ENCODE measurements at regions of chr3 and their contacts with region 1.

Region 1: DNA sequence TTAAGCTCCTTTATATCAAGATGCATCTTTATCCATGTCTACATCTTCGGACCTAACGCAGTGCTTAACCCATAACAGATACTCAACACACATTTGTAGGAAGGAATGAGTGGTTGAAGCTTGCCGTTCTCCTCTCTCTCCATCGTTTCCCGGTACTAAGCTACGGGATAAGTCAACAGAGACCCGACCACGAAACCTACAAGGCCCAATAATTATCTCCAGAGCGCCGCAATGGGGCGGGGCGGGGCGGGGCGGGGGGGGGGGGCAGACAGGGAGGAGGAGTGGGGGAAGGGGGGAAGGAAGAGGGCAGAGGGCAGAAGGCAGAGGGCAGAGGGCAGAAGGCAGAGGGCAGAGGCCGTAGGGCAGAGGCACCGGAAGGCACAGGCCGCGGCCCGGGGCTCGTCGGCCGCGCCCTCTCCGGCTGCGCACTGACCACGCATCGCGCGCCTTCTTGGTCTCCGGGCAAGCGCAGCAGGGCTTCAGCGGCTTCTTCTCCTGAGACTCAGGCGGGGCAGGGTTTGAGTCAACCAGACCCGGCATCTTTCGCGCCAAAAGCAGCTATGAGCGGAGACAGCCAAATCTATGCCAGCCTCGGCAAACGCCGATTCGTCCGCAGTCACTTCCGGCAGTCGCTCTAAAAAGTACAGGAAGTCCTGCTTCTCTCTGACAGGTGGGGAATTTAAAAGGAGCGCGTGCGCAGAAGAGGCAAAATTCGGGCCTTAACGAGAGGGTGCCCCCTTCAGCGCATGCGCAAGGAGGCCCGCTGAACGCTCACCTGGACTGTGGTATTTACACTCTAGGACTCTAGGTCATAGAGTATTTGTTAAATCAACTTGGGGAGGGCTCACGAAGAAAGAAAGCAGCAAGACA is at the start of gene COX17:
- DNase-seq: peak; percentile 93 to 96
- ATAC-seq: peak; percentile 91 to 95 (median 92)
- H3K4me3 ChIP-seq: peak within 1 kb of the TSS; percentile 92
- H3K27ac ChIP-seq: peak within 1 kb of the TSS; percentile 97
- H3K4me1 ChIP-seq: peaks cover 18% of the 10 kb centered on the region
- H3K27me3 ChIP-seq: no peaks in the 10 kb centered on the region
- CTCF ChIP-seq: no peak
- total RNA-seq, gene COX17: 89.5 to 180 (median 127) TPM

Region 2: DNA sequence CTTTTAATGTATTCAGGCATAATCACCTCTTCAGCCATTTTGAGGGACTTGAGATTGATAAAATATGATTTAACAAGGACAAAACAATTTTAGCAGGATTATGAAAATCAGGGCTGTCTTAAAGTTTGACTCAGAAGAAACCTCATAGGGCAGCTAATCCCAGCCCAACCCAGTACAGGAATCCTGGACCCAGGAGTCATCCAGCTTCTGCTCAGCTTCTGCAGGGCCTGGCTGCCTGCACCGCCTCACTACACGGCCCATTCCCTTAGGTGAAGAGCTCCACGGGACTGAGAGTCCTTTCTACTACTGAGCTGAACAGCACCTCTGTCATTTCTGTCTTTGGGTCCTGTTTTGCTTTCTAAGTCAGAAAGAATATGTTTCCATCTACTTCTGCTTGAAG is 345.3 kb before region 1 on chr3:
- intact Hi-C with region 1: no loop called
- DNase-seq: no peak
- ATAC-seq: no peak
- H3K4me3 ChIP-seq: no peak overlapping the region
- H3K27ac ChIP-seq: no peak overlapping the region
- H3K4me1 ChIP-seq: no peaks in the 10 kb centered on the region
- H3K27me3 ChIP-seq: no peaks in the 10 kb centered on the region
- CTCF ChIP-seq: no peak

Region 3: DNA sequence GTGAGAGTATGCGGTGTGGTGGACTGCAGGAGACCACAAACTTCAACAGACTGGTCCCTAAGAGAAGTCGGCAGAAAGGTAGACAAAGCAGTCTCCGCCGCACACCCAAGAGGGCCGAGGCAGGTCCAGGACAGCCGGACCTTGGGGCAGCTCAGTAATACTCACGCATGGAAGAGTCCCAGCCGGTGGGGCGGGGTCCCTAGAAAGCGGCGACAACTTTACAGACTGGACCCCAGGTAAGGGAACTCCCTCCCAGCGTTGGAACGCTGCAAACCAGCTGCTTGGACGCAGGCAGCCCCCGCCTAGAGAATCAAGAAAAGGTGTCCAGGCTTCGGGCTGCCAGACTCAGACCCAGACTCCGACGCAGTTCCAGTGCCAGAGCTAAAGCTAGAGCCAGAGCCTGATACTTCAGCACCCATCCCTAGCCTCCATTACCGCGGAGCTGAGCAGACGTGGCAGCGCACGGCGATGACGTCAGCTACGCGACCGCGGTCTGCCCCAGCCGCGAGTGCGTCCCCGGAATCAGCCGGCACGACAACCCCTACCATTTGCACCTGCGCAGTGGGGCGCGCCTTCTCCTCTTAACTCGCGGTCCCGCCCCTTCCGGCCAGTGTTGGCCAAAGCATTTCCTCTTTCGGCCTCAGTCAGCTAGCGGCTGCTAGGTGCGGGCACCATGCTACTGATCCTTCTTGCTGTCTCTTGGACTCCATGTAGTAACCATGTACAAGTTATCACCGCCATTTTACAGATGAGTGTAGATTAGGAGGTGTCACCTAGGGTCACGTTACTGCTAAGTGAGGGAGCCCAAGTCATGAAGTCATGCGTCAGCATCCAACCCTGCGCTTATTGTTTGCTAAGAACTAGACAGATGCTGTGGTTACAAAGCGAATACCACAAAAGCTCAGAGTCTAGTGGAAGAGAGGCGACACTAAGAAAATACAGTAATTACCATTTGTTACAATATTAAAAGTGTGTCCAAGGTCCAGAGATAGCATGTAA is 213.5 kb before region 1 on chr3 and contains the start of gene TMEM39A:
- intact Hi-C with region 1: loop called in 1 of 2 experiments (anchors 10 kb)
- DNase-seq: peak; percentile 100
- ATAC-seq: peak; percentile 98 to 99 (median 99)
- H3K4me3 ChIP-seq: peak within 1 kb of the TSS; percentile 87
- H3K27ac ChIP-seq: peak within 1 kb of the TSS; percentile 92
- H3K4me1 ChIP-seq: peaks cover 15% of the 10 kb centered on the region
- H3K27me3 ChIP-seq: no peaks in the 10 kb centered on the region
- CTCF ChIP-seq: peak; percentile 12
- total RNA-seq, gene TMEM39A: 7.5 to 15.6 (median 10.1) TPM

Region 4: DNA sequence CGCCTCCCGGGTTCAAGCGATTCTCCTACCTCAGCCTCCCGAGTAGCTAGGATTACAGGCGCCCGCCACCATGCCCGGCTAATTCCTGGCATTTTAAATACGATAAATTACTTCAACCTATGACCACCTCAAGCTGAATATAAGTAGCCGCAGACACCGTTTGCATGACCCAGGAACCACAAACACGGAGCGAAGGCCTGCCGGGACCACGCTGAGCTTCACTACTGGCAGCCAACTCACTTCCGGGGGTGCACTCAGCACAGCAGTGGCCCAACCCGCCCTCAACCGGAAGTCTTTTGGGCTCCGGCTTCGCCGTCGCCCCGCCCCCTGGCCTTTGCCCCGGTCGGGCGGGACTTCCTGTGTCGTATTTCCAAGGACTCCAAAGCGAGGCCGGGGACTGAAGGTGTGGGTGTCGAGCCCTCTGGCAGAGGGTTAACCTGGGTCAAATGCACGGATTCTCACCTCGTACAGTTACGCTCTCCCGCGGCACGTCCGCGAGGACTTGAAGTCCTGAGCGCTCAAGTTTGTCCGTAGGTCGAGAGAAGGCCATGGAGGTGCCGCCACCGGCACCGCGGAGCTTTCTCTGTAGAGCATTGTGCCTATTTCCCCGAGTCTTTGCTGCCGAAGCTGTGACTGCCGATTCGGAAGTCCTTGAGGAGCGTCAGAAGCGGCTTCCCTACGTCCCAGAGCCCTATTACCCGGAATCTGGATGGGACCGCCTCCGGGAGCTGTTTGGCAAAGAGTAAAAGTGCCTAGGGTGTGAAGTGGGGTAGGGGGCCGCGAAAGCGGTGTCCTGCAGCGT is 178.6 kb before region 1 on chr3 and contains the start of gene TIMMDC1:
- intact Hi-C with region 1: loop called (anchors 5 to 10 kb)
- DNase-seq: peak; percentile 98
- ATAC-seq: peak; percentile 98 to 99 (median 98)
- H3K4me3 ChIP-seq: peak within 1 kb of the TSS; percentile 97
- H3K27ac ChIP-seq: peak within 1 kb of the TSS; percentile 99
- H3K4me1 ChIP-seq: peaks cover 36% of the 10 kb centered on the region
- H3K27me3 ChIP-seq: no peaks in the 10 kb centered on the region
- CTCF ChIP-seq: no peak
- total RNA-seq, gene TIMMDC1: 147 to 198 (median 182) TPM

Region 5: GRCh38 chr3:119524931-119525662 is 151.9 kb before region 1 on chr3:
- intact Hi-C with region 1: loop called in 1 of 2 experiments (anchors 5 kb)
- DNase-seq: no peak
- ATAC-seq: peak in 3 of 4 donors; percentile 30 to 67 (median 46)
- H3K4me3 ChIP-seq: no peak overlapping the region
- H3K27ac ChIP-seq: peak overlapping the region; percentile 33
- H3K4me1 ChIP-seq: no peaks in the 10 kb centered on the region
- H3K27me3 ChIP-seq: no peaks in the 10 kb centered on the region
- CTCF ChIP-seq: peak; percentile 53

Region 6: GRCh38 chr3:119579366-119580165 is 97.4 kb before region 1 on chr3 and contains the start of gene ADPRH:
- intact Hi-C with region 1: loop called in 1 of 2 experiments (anchors 5 kb)
- DNase-seq: peak; percentile 87 to 94
- ATAC-seq: peak; percentile 89 to 95 (median 93)
- H3K4me3 ChIP-seq: peak within 1 kb of the TSS; percentile 71
- H3K27ac ChIP-seq: peak within 1 kb of the TSS; percentile 97
- H3K4me1 ChIP-seq: peaks cover 8% of the 10 kb centered on the region
- H3K27me3 ChIP-seq: no peaks in the 10 kb centered on the region
- CTCF ChIP-seq: no peak
- total RNA-seq, gene ADPRH: 12.6 to 16.9 (median 14.5) TPM

Region 7: DNA sequence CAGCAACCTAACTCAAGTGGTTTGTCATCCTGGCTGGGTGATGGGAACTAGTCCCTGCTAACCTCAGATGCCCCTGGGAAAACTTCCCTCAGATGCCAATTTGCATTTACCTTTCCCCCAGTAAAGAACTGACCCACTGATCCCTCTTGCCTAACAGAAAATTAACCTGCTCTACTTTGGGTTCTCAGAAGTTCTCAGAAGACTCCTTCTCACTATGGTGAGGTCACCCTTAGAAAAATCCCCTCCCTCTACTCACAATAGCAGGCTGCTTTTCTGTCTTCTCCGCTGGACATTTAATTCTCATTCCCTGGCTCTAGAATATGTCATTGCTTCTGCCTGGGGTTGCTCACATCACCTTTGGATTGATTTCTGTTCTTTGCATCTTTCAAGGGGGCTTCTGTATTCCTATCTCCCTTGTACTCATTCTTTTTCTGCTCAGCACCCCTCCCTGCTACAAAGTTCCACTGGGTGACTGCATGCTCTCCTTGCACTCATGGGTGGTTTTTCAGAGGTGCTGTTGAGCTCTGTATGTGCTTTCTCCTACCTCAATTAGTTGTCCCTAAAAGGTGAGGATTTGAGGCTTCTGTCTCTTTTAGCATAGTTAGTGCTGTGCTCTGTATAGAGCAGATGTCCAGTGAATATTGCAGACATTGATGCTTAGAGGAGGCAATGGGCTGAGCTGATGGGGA is 78.5 kb before region 1 on chr3:
- intact Hi-C with region 1: loop called in 1 of 2 experiments (anchors 5 kb)
- DNase-seq: no peak
- ATAC-seq: no peak
- H3K4me3 ChIP-seq: peak overlapping the region; percentile 33
- H3K27ac ChIP-seq: peak overlapping the region; percentile 92
- H3K4me1 ChIP-seq: peaks cover 47% of the 10 kb centered on the region
- H3K27me3 ChIP-seq: no peaks in the 10 kb centered on the region
- CTCF ChIP-seq: no peak

Region 8: DNA sequence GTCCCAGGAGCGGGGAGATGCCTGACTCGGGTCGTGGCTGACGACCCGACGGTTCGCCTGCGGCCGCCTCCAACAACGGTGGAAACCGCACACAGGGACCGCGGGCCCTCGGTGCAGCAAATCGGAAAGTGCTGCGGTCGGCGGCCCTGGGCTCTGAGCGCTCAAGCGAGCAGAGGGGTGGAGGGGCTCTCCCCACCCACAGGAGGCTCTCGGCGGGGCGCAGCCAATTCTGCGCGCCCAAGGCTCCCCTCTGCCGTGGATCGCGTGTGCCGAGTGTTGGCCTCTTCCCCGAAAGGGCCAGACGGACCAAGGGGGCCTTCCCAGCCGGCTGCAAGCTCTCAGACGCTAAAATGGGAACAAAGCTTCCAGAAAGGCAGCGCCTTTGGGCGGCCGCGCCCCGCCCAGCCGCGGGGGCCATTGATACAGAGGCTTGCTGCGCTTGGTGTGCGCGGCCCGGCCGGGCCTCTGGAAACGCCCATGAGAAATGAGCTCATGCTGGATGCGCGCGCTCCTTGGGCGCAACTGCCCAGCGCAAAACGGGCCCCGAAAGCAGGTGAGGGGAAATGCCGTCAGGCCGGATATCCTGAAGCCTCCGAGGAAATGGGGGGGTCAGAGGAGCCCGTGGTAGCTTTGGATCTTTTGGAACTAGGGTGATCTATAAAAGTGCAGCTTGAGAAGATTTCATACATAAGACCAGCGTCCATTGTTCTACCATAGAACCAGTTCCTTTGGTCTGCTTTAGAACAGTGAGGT is 418.4 kb after region 1 on chr3:
- intact Hi-C with region 1: no loop called
- DNase-seq: peak; percentile 91 to 94
- ATAC-seq: peak; percentile 62 to 71 (median 64)
- H3K4me3 ChIP-seq: peak overlapping the region; percentile 96
- H3K27ac ChIP-seq: peak overlapping the region; percentile 100
- H3K4me1 ChIP-seq: peaks cover 11% of the 10 kb centered on the region
- H3K27me3 ChIP-seq: no peaks in the 10 kb centered on the region
- CTCF ChIP-seq: no peak